MCF 10A (cell line): ENCODE measurements at regions of chr1 and their contacts with region 1.

Region 1: DNA sequence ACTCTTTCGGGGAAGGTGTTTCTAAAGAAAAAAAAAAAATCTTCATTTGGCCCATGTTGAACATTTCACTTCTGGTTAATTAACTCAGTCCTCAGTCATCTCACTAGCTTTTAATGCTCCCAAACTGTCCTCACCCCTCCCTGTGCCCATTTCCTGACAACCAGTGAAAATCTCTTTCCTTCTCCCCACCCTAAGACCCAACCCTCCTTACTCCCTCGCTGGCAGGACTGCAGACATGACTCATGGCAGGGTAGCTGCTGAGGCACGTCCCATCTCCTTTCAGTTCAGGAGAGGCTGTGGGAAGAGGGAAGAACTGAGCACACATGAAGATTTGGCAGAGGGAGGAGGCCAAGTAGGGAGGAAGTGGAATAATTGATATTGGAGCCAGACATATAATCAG is 12.6 kb downstream of the PKP1 start:
- DNase-seq: peak; percentile 100
- H3K4me3 Mint-ChIP-seq: peak overlapping the region; percentile 42
- H3K27ac Mint-ChIP-seq: peak overlapping the region; percentile 75
- H3K4me1 Mint-ChIP-seq: peaks cover 50% of the 10 kb centered on the region
- H3K27me3 Mint-ChIP-seq: no peaks in the 10 kb centered on the region
- CTCF ChIP-seq: no peak

Region 2: DNA sequence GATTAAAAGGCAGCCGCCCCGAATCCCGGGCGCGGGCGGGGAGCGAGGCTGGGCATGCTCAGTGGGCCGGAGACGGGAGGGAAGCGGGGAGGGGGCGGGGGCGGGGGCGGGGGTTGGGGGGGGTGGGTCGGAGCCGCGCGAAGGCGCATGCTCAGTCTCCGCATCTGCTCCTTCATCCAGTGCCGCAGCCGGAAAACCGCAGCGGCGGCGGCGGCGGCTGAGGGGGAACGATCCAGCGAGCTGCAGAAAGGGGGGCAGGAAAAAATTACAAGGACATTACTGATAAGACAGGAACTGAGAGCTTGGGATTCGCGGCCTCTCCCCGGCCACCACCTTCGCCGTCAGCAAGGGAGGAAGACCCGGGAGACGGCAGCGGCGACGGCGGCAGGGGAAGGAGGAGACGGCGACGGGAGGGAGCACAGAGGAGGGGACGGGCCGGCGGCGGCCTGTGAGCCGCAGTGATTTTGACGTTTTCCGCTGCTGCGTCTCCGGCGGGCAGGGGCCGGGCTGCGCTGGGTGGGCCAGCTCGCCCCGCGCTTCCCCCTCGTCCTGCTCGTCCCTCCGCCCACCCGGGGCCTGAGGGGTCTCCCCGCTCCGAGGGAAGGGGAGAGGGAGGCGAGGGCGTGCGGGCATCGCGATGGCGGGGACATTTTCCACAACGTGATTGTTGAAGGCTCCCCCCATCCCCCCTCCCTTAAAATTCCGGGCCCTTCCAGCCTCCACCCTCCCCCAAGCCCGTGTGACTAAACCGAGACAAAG is 556.9 kb before region 1 on chr1 and contains the start of gene CAMSAP2:
- CTCF ChIA-PET with region 1: no interaction called
- POLR2A ChIA-PET with region 1: no interaction called
- intact Hi-C with region 1: no loop called
- DNase-seq: peak; percentile 95
- H3K4me3 Mint-ChIP-seq: peak within 1 kb of the TSS; percentile 84
- H3K27ac Mint-ChIP-seq: peak within 1 kb of the TSS; percentile 95
- H3K4me1 Mint-ChIP-seq: peaks cover 26% of the 10 kb centered on the region
- H3K27me3 Mint-ChIP-seq: no peaks in the 10 kb centered on the region
- CTCF ChIP-seq: no peak
- total RNA-seq, gene CAMSAP2: 144 and 209 TPM in 2 replicates

Region 3: GRCh38 chr1:201268604-201269151 is 27.2 kb before region 1 on chr1:
- CTCF ChIA-PET with region 1: interaction called, 474 read pairs
- POLR2A ChIA-PET with region 1: interaction called, 3,819 read pairs
- intact Hi-C with region 1: loop called (anchors 2 kb)
- DNase-seq: peak; percentile 99
- H3K4me3 Mint-ChIP-seq: no peak overlapping the region
- H3K27ac Mint-ChIP-seq: peak overlapping the region; percentile 89
- H3K4me1 Mint-ChIP-seq: peaks cover 48% of the 10 kb centered on the region
- H3K27me3 Mint-ChIP-seq: no peaks in the 10 kb centered on the region
- CTCF ChIP-seq: no peak

Region 4: DNA sequence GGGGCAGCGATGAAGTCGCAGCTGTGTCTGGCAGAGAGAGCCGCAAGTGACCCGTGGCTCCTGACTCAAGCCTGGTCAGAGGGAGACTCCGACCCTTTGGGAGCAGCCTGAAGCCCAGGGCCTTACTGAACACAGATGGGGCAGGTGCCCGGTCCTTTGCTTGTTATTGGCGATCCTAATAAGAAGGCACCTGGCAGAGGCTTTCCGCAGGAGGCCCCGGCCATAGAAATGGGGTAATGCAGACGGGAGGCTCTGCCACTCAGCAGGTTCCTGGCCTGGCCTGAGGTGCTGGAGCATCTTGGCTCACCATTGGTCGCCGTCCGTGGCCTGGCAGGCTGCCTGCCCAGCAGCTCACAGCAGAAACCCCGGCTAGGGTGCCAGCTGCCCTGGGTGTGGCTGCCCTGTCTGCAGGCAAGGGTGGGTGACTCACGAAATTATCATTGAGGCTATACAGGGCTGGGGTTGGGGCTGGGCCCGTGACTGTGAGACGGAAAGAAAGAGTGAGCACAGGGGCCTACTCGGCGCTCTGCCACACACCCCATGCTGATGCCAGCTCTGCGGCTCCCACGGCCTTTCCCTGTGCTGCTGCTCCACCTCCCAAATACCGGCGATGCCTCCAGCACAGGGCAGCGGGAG is 20.7 kb before region 1 on chr1:
- CTCF ChIA-PET with region 1: interaction called, 474 read pairs
- POLR2A ChIA-PET with region 1: interaction called, 3,819 read pairs
- intact Hi-C with region 1: loop called (anchors 1 kb)
- DNase-seq: peak; percentile 100
- H3K4me3 Mint-ChIP-seq: no peak overlapping the region
- H3K27ac Mint-ChIP-seq: peak overlapping the region; percentile 79
- H3K4me1 Mint-ChIP-seq: peaks cover 52% of the 10 kb centered on the region
- H3K27me3 Mint-ChIP-seq: no peaks in the 10 kb centered on the region
- CTCF ChIP-seq: no peak

Region 5: DNA sequence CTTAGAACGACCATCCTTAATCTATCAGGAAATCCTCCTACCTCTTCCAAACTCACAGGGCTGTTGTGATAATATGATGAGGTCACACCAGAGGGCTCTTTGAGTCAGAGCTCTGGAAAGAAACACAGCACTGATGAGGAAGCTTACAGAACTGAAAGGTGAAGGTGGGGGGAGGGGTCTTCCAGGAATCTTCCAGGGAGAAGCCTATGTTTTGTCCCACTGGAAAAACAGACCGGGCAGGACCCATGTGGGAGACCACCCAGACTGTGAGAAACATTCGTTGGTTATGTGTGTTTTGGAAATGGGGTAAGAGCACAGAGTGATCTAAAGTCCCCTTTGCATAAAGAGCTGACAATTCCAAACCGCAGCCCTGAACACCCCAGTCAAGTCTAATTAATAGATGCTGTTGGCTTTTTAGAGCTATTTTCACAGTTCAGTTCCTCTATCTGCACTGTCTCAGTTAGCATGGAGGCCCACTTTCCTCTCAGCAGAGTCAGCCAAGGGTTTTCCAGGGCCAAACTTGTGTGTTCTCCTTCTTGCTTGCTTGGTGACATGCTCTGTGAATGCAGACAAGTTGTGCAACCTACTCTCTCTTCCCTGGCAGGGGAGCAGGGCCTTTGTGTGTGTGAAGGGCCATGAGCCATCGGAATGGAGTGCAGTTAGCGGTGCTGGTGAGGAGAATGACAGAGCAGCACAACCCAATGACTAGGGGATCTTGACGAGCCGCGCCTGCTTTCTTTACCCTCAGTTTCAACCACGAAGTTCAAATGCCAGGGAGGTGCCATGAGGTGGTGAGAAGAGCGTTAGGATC is 160.8 kb after region 1 on chr1:
- CTCF ChIA-PET with region 1: no interaction called
- POLR2A ChIA-PET with region 1: interaction called, 11 read pairs
- intact Hi-C with region 1: no loop called
- DNase-seq: peak; percentile 97
- H3K4me3 Mint-ChIP-seq: no peak overlapping the region
- H3K27ac Mint-ChIP-seq: peak overlapping the region; percentile 67
- H3K4me1 Mint-ChIP-seq: peaks cover 49% of the 10 kb centered on the region
- H3K27me3 Mint-ChIP-seq: no peaks in the 10 kb centered on the region
- CTCF ChIP-seq: no peak

Region 6: DNA sequence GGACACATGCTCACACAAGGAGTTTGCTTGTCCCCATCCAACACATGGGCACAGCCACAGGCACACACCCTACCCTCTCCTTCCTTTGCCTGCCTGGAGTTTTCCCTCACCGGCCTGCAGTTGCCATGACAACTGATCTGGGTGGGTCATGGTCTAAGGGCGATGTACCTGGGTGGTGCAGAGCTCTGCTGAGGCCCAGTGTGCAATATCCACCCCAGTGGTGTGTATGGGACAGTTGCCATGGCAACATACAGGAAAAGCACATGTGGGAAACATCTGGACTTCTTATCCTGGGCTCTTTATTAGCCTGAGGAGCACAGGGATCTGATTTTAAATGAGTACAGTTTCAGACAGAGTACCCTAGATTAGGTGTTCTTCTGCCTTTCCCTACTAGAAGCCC is 341.8 kb after region 1 on chr1:
- CTCF ChIA-PET with region 1: no interaction called
- POLR2A ChIA-PET with region 1: no interaction called
- intact Hi-C with region 1: loop called (anchors 5 kb)
- DNase-seq: no peak
- H3K4me3 Mint-ChIP-seq: no peak overlapping the region
- H3K27ac Mint-ChIP-seq: no peak overlapping the region
- H3K4me1 Mint-ChIP-seq: peaks cover 5% of the 10 kb centered on the region
- H3K27me3 Mint-ChIP-seq: peaks cover 13% of the 10 kb centered on the region
- CTCF ChIP-seq: no peak

Region 7: GRCh38 chr1:202160377-202160940 is 864.6 kb after region 1 on chr1 and contains the start of gene PTPN7:
- CTCF ChIA-PET with region 1: no interaction called
- POLR2A ChIA-PET with region 1: no interaction called
- intact Hi-C with region 1: no loop called
- DNase-seq: no peak
- H3K4me3 Mint-ChIP-seq: no peak within 1 kb of the TSS
- H3K27ac Mint-ChIP-seq: no peak within 1 kb of the TSS
- H3K4me1 Mint-ChIP-seq: peaks cover 8% of the 10 kb centered on the region
- H3K27me3 Mint-ChIP-seq: peaks cover 11% of the 10 kb centered on the region
- CTCF ChIP-seq: peak; percentile 11
- total RNA-seq, gene PTPN7: not detected in 2 replicates